Heart left ventricle (tissue), 16 donors: ENCODE measurements at regions of chr1 and their contacts with region 1.

Region 1: DNA sequence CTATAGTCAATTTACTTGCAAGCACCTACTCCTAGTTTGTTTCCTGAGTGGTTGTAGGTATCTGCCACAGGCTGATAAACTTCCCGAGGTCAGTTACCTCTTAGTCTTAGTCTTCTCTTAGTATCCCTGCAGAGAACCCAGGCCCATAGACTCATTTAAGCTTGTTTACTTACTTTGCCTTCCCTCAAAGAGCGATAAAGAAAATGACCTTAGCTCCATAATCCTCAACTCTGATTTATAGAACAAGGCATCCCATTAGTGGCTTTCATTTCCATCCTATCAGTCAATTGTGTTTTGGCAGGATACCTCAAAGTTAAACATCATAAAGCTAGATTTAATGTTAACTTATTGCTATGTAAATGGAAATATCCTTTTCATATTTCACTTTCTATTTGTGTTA is 119.7 kb downstream of the UCHL5 start:
- DNase-seq: no peak
- ATAC-seq: no peak
- H3K4me3 ChIP-seq: no peak overlapping the region
- H3K27ac ChIP-seq: no peak overlapping the region
- H3K4me1 ChIP-seq: peaks cover 0 to 27% (median 0%) of the 10 kb centered on the region in 12 donors
- H3K27me3 ChIP-seq: no peaks in the 10 kb centered on the region
- CTCF ChIP-seq: no peak
- POLR2A ChIP-seq: no peak

Region 2: DNA sequence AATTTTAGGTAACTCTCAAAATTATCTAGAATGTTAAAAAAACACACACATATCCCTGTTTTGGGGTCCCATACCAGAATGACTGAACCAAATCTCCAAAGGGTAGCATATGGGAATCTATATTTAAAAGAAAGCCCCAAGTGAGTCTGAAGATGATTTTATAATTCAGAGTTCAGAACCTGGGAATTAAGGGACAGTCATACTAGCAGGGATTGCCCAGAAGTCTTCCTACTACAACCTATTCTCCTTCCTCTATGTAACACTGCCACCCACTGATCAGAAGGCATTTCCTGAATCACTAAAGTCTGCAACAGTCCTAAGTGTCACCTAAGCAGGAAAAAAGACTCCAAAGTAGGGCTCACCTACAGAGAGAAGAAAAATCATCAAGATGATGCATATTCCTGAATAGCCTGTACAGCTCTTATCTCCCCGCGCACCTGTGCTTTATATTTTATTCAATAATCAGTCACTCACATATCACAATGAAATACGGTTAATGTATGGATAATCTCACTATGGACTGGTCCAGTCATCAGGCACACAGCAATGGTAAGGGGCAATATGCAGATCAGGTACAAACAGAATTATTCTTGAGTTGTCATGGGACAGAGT is 359.0 kb before region 1 on chr1:
- intact Hi-C with region 1: no loop called
- DNase-seq: no peak
- ATAC-seq: peak in 3 of 4 donors; percentile 47 to 82 (median 81)
- H3K4me3 ChIP-seq: no peak overlapping the region
- H3K27ac ChIP-seq: peak overlapping the region in 1 of 12 donors; percentile 71
- H3K4me1 ChIP-seq: no peaks in the 10 kb centered on the region
- H3K27me3 ChIP-seq: no peaks in the 10 kb centered on the region
- CTCF ChIP-seq: peak in 9 of 12 donors; percentile 8 to 50 (median 32)
- POLR2A ChIP-seq: no peak

Region 3: GRCh38 chr1:192907545-192908243 is 31.7 kb before region 1 on chr1:
- intact Hi-C with region 1: loop called in 1 of 10 experiments (anchors 2 kb)
- DNase-seq: no peak
- ATAC-seq: peak in 1 of 4 donors; percentile 27
- H3K4me3 ChIP-seq: no peak overlapping the region
- H3K27ac ChIP-seq: peak overlapping the region in 1 of 12 donors; percentile 73
- H3K4me1 ChIP-seq: peaks cover 0 to 16% (median 0%) of the 10 kb centered on the region in 12 donors
- H3K27me3 ChIP-seq: no peaks in the 10 kb centered on the region
- CTCF ChIP-seq: no peak
- POLR2A ChIP-seq: no peak